ENCODE measurements at regions of chr2 and their contacts with region 1.

Region 1: GRCh38 chr2:101983928-101984327 is 7.8 kb upstream of the IL1R2 start:
- DNase-seq: no peak
- H3K4me3 ChIP-seq: no peak overlapping the region
- H3K27ac ChIP-seq: no peak overlapping the region
- H3K27me3 ChIP-seq: no peaks in the 10 kb centered on the region
- CTCF ChIP-seq: peak in 45 of 56 donors; percentile 9 to 62 (median 36)

Region 2: DNA sequence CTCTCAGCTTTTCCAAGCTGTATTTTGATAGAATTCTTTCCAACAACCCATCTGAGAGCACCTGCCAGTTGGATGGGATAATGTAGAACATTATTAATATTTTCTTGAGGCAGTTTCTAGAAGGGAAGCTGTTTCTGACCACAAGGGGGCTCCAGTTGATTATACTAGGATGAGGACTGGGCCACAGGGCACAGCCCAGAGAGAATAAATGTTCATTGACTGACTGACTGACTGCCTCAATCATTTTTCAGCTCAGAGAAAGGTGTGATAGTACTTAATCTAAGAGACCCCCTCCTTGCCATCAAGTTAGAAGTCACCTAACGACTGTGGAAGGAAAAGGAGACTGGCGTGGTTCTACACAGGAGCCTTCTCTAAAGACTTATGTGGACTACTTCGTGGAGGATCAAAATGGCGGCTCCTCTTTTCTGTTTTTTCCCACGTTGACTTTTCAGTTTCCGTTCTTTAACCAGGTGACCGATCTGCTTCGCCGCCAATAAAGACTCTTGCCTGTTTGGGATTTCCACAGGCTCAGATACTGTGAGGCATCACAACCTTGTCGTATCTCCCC is 564.7 kb before region 1 on chr2:
- intact Hi-C with region 1: loop called in 1 of 2 experiments (anchors 10 kb)
- DNase-seq: peak in 3 of 10 donors; percentile 12 to 63 (median 36)
- H3K4me3 ChIP-seq: no peak overlapping the region
- H3K27ac ChIP-seq: no peak overlapping the region
- H3K27me3 ChIP-seq: no peaks in the 10 kb centered on the region
- CTCF ChIP-seq: peak; percentile 54 to 82 (median 69)

Region 3: GRCh38 chr2:101692041-101692440 is 291.9 kb before region 1 on chr2:
- intact Hi-C with region 1: no loop called
- DNase-seq: no peak
- H3K4me3 ChIP-seq: no peak overlapping the region
- H3K27ac ChIP-seq: no peak overlapping the region
- H3K27me3 ChIP-seq: no peaks in the 10 kb centered on the region
- CTCF ChIP-seq: no peak

Region 4: DNA sequence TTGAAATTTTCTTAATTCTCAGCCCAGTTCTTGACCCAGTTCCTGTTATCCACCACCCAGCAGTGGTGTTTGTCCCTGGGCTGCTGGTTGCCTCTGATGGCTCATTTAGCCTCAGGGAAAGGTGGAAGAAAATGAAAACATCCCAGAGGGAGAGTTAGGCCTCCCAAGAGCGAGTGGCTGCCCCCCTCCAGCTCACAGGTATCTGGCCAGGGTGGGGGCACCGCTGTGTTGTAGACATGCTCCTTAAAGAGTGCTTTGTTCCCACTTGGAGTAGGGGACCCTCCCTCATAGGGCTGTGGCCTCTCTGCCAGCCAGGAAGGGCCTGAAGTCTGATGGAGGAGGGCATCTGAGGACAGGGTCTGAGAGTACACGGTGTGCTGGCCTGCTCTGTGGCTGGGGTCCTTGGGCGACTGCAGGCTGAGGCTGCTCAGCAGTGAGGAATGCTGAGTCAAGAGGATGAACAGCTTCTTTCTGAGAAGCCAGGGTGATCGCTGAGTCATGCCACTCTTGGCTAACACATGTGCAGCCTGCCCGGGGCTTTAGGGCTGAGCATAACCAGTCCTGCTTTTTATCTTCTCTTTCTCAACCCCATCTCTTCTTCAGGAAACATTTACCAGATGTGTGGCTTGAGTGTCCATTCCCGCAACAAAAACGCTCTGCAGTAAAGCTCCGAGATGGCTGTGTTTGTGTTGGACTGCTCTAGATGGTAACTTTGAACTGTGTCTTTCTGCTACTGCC is 80.2 kb after region 1 on chr2:
- intact Hi-C with region 1: no loop called
- DNase-seq: peak in 4 of 10 donors; percentile 54 to 78 (median 68)
- H3K4me3 ChIP-seq: no peak overlapping the region
- H3K27ac ChIP-seq: peak overlapping the region in 23 of 59 donors; percentile 11 to 73 (median 49)
- H3K27me3 ChIP-seq: no peaks in the 10 kb centered on the region
- CTCF ChIP-seq: no peak

Measured in dorsolateral prefrontal cortex (tissue), 120 donors.